Ovary (tissue), 10 donors: ENCODE measurements at regions of chr3 and their contacts with region 1.

Region 1: DNA sequence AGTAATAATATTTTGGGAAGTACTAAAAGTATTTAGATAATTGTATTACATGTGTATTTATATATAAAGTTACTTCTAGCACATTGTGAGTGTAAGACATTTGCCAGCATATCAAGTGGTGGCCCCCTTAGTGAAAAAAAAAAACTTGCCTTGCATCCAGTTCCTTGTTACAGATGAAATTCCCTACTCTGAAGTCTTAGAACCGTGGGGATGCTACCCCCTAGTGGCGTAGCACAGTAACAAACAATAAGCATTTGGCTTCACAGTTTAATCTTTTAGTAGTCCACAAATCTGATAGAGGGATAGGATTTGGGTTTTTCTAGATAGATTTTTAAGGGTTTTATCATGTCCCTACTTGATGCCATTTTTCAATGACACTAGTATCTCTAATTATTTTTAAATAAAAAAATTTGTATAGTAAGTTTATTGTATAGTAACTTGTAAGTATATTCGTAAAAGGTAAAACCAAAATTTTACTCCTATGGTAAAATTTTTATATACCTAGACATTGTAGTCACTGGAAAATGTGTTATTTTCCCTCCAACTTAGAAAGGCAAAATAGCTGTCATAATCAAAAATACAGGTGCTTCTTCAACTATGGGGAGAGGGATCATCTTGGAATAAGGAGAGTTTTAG is 14.3 kb downstream of the SMC4 start:
- DNase-seq: peak; percentile 42 to 61 (median 54)
- H3K4me3 ChIP-seq: no peak overlapping the region
- H3K27ac ChIP-seq: no peak overlapping the region
- H3K4me1 ChIP-seq: no peaks in the 10 kb centered on the region
- H3K27me3 ChIP-seq: no peaks in the 10 kb centered on the region
- CTCF ChIP-seq: peak; percentile 56 to 69 (median 58)
- EP300 ChIP-seq: no peak
- POLR2A ChIP-seq: no peak

Region 2: GRCh38 chr3:160027541-160028195 is 386.1 kb before region 1 on chr3:
- intact Hi-C with region 1: loop called in 2 of 4 experiments (anchors 2 to 10 kb)
- DNase-seq: no peak
- H3K4me3 ChIP-seq: no peak overlapping the region
- H3K27ac ChIP-seq: no peak overlapping the region
- H3K4me1 ChIP-seq: no peaks in the 10 kb centered on the region
- H3K27me3 ChIP-seq: no peaks in the 10 kb centered on the region
- CTCF ChIP-seq: no peak
- EP300 ChIP-seq: no peak
- POLR2A ChIP-seq: no peak

Region 3: GRCh38 chr3:160038862-160039562 is 374.7 kb before region 1 on chr3:
- intact Hi-C with region 1: loop called in 1 of 4 experiments (anchors 10 kb)
- DNase-seq: no peak
- H3K4me3 ChIP-seq: no peak overlapping the region
- H3K27ac ChIP-seq: no peak overlapping the region
- H3K4me1 ChIP-seq: peaks cover 2% of the 10 kb centered on the region
- H3K27me3 ChIP-seq: no peaks in the 10 kb centered on the region
- CTCF ChIP-seq: no peak
- EP300 ChIP-seq: no peak
- POLR2A ChIP-seq: no peak

Region 4: GRCh38 chr3:160163229-160163878 is 250.4 kb before region 1 on chr3:
- intact Hi-C with region 1: loop called in 2 of 4 experiments (anchors 5 to 10 kb)
- DNase-seq: no peak
- H3K4me3 ChIP-seq: no peak overlapping the region
- H3K27ac ChIP-seq: no peak overlapping the region
- H3K4me1 ChIP-seq: no peaks in the 10 kb centered on the region
- H3K27me3 ChIP-seq: no peaks in the 10 kb centered on the region
- CTCF ChIP-seq: no peak
- EP300 ChIP-seq: no peak
- POLR2A ChIP-seq: no peak